CD4-positive, alpha-beta T cell (primary cell): ENCODE measurements at regions of chr2 and their contacts with region 1.

Region 1: GRCh38 chr2:171109571-171109970 is 51.1 kb downstream of the TLK1 start:
- DNase-seq: no peak
- ATAC-seq: no peak
- H3K4me3 ChIP-seq: no peak overlapping the region
- H3K4me3 Mint-ChIP-seq: no peak overlapping the region
- H3K27ac ChIP-seq: no peak overlapping the region
- H3K27ac Mint-ChIP-seq: peak overlapping the region; percentile 21
- H3K4me1 ChIP-seq: peaks cover 4% of the 10 kb centered on the region
- H3K4me1 Mint-ChIP-seq: peaks cover 80% of the 10 kb centered on the region
- H3K27me3 ChIP-seq: no peaks in the 10 kb centered on the region
- H3K27me3 Mint-ChIP-seq: no peaks in the 10 kb centered on the region
- CTCF ChIP-seq: no peak

Region 2: GRCh38 chr2:171034315-171034714 is 75.3 kb before region 1 on chr2:
- CTCF ChIA-PET with region 1: no interaction called
- POLR2A ChIA-PET with region 1: no interaction called
- intact Hi-C with region 1: no loop called
- DNase-seq: no peak
- ATAC-seq: no peak
- H3K4me3 ChIP-seq: no peak overlapping the region
- H3K4me3 Mint-ChIP-seq: no peak overlapping the region
- H3K27ac ChIP-seq: no peak overlapping the region
- H3K27ac Mint-ChIP-seq: peak overlapping the region; percentile 8
- H3K4me1 ChIP-seq: no peaks in the 10 kb centered on the region
- H3K4me1 Mint-ChIP-seq: peaks cover 15% of the 10 kb centered on the region
- H3K27me3 ChIP-seq: no peaks in the 10 kb centered on the region
- H3K27me3 Mint-ChIP-seq: no peaks in the 10 kb centered on the region
- CTCF ChIP-seq: no peak

Region 3: GRCh38 chr2:171124541-171124940 is 15.0 kb after region 1 on chr2:
- CTCF ChIA-PET with region 1: no interaction called
- POLR2A ChIA-PET with region 1: no interaction called
- intact Hi-C with region 1: loop called in 1 of 2 experiments (anchors 2 kb)
- DNase-seq: no peak
- ATAC-seq: no peak
- H3K4me3 ChIP-seq: no peak overlapping the region
- H3K4me3 Mint-ChIP-seq: no peak overlapping the region
- H3K27ac ChIP-seq: no peak overlapping the region
- H3K27ac Mint-ChIP-seq: peak overlapping the region; percentile 4
- H3K4me1 ChIP-seq: peaks cover 13% of the 10 kb centered on the region
- H3K4me1 Mint-ChIP-seq: peaks cover 83% of the 10 kb centered on the region
- H3K27me3 ChIP-seq: no peaks in the 10 kb centered on the region
- H3K27me3 Mint-ChIP-seq: no peaks in the 10 kb centered on the region
- CTCF ChIP-seq: no peak

Region 4: GRCh38 chr2:171141320-171141719 is 31.7 kb after region 1 on chr2:
- CTCF ChIA-PET with region 1: interaction called, 3 read pairs
- POLR2A ChIA-PET with region 1: no interaction called
- intact Hi-C with region 1: loop called in 1 of 2 experiments (anchors 5 kb)
- DNase-seq: no peak
- ATAC-seq: peak; percentile 46
- H3K4me3 ChIP-seq: no peak overlapping the region
- H3K4me3 Mint-ChIP-seq: peak overlapping the region; percentile 26
- H3K27ac ChIP-seq: no peak overlapping the region
- H3K27ac Mint-ChIP-seq: peak overlapping the region; percentile 25
- H3K4me1 ChIP-seq: peaks cover 39% of the 10 kb centered on the region
- H3K4me1 Mint-ChIP-seq: peaks cover 92% of the 10 kb centered on the region
- H3K27me3 ChIP-seq: no peaks in the 10 kb centered on the region
- H3K27me3 Mint-ChIP-seq: no peaks in the 10 kb centered on the region
- CTCF ChIP-seq: no peak